ENCODE measurements at regions of chr2 and their contacts with region 1.

Region 1: GRCh38 chr2:42494355-42495233 is 812 bp upstream of the KCNG3 start:
- DNase-seq: peak; percentile 14
- H3K4me3 ChIP-seq: peak overlapping the region; percentile 50
- CTCF ChIP-seq: peak; percentile 73

Region 2: DNA sequence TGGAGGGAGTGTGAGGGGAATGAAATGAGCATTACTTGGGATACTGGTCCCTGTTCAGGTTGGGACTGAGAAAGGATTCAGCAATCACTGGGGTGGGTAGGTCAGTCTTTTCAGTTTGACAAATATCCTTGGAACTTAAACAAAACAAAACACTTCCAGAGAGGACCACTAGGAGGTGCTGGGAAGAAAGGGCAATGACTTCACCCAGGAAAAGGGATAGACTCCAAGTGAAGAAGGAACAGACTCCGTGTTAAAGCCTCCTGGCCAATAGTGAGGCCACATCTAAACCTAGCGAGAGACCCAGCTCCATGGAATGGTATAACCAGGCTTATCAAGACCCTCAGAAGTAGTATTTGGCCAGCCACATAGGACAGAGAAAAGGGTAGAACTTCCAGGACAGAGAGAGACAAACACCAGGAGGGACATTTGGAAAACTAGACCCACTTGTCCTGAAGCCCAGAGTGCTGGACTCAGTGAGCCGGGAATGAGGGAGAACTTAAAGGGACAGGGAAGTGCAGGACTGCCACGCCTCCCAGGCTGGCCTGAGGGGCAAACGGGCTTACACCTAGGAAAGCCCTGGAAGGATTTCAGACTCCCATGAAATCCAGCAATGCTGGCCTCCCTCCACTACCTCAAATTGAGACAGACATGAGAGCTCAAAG is 18.8 kb after region 1 on chr2:
- CTCF ChIA-PET with region 1: interaction called, 14 read pairs
- POLR2A ChIA-PET with region 1: no interaction called
- DNase-seq: peak; percentile 4
- H3K4me3 ChIP-seq: no peak overlapping the region
- CTCF ChIP-seq: peak; percentile 63

Region 3: GRCh38 chr2:42792583-42793333 is 298.2 kb after region 1 on chr2 and contains the start of gene HAAO:
- CTCF ChIA-PET with region 1: no interaction called
- POLR2A ChIA-PET with region 1: no interaction called
- DNase-seq: no peak
- H3K4me3 ChIP-seq: peak within 1 kb of the TSS; percentile 46
- CTCF ChIP-seq: peak; percentile 10

Measured in AG04449 (cell line).